Activated T-helper 1 cell treated with anti-CD3 and anti-CD28 coated beads, Interleukin-12 subunit alpha, Interleukin-12 subunit beta, Interleukin-2, Interleukin-4 antibody, amounts not matched to agents 30 ng/mL and 10 ng/mL and 1 ng/mL, durations not matched to agents 14 hours and 24 hours and 36 hours (primary cell): ENCODE measurements at regions of chr17 and their contacts with region 1.

Region 1: GRCh38 chr17:81322271-81323082 is 27.4 kb upstream of the SLC38A10 start:
- DNase-seq: peak; percentile 33
- H3K4me3 Mint-ChIP-seq: no peak overlapping the region
- H3K27ac Mint-ChIP-seq: no peak overlapping the region
- H3K4me1 Mint-ChIP-seq: no peaks in the 10 kb centered on the region
- H3K27me3 Mint-ChIP-seq: no peaks in the 10 kb centered on the region

Region 2: DNA sequence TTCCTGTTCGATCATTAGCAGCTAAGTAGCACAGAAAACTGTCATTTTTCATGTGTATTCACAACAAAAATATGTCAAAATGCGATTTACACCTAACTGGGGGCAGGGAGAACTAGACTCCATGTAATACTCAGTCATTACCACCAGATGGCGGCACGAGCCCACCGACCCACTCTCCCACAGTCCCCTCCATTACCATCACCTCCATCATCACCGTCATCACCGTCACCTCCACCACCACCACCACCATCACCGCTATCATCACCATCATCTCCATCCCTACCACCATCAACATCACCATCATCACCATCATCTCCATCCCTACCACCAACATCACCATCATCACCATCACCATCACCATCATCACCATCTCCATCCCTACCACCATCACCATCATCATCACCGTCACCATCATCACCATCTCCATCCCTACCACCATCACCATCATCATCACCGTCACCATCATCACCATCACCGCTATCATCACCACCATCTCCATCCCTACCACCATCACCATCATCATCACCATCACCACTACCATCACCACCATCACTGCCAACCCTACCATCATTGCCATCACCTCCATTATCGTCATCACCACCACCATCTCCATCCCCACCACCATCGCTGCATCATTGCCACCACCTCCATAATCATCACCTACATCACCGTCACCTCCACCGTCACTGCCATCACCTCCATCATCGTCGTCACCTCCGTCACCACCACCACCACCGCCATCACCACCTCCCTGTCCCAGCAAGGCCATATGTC is 68.9 kb before region 1 on chr17:
- intact Hi-C with region 1: loop called (anchors 1 kb)
- DNase-seq: peak; percentile 38
- H3K4me3 Mint-ChIP-seq: no peak overlapping the region
- H3K27ac Mint-ChIP-seq: peak overlapping the region; percentile 14
- H3K4me1 Mint-ChIP-seq: no peaks in the 10 kb centered on the region
- H3K27me3 Mint-ChIP-seq: no peaks in the 10 kb centered on the region